AG04449 (cell line): ENCODE measurements at regions of chr19 and their contacts with region 1.

Region 1: DNA sequence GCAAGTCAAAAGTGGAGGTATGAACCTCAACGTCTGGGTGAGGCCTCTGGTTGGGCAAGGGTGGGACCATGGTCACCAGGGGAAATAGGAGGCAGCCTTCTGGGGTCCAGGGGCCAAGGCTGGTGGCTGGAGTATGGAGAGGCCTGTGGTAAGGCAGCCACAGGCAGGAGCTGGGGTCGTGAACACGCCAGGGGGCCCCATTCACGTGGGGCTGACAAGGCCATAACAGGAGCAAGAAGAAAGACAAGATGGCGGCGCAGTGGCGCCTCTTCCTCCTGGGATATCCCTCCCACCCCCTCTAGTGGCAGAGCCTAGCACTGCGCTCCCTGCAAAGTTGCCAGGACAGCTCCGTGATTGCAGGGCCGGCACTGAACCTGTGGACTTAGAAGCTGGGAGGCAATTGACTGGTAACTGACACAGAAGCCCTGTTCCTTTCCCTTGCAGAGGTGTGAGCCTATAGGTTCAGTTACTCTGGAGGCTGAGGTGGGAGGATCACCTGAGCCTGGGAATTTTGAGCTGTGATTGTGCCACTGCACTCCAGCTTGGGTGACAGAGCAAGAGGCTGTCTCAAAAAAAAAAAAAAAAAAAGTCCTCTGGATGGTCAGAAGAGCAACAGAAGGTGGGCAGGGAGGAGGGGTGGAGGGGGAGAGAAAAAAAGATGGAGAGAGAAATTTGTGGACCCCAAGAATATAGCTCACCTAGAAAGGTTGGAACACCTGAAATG is 19.7 kb upstream of the EDDM13 start:
- DNase-seq: no peak
- H3K4me3 ChIP-seq: no peak overlapping the region
- CTCF ChIP-seq: peak; percentile 89

Region 2: GRCh38 chr19:56066152-56067023 is 186.5 kb before region 1 on chr19:
- CTCF ChIA-PET with region 1: interaction called, 12 read pairs
- POLR2A ChIA-PET with region 1: no interaction called
- DNase-seq: no peak
- H3K4me3 ChIP-seq: peak overlapping the region; percentile 36
- CTCF ChIP-seq: peak; percentile 93

Region 3: GRCh38 chr19:56273563-56274117 is 20.8 kb after region 1 on chr19:
- CTCF ChIA-PET with region 1: interaction called, 80 read pairs
- POLR2A ChIA-PET with region 1: no interaction called
- DNase-seq: no peak
- H3K4me3 ChIP-seq: no peak overlapping the region
- CTCF ChIP-seq: no peak

Region 4: GRCh38 chr19:56333505-56333904 is 80.6 kb after region 1 on chr19:
- CTCF ChIA-PET with region 1: interaction called, 207 read pairs
- POLR2A ChIA-PET with region 1: no interaction called
- DNase-seq: no peak
- H3K4me3 ChIP-seq: no peak overlapping the region
- CTCF ChIP-seq: peak; percentile 67

Region 5: DNA sequence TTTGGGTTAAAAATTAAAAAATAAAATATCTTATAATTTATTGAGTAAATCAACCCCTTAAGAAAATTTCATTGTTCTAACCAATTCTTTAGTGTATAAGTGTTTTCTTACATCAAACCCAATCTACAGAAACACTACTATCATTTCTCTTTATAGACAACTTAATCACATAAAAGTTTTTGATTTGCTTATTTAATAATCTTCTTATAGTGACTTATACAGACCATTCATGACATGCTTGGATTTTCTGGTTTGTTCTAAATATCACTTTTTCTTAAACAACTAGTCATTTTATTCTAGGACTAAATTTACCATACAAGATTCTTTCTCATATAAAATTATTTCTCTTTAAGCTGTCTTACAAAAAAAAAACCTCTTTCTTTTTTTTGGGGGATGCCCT is 89.1 kb after region 1 on chr19:
- CTCF ChIA-PET with region 1: interaction called, 16 read pairs
- POLR2A ChIA-PET with region 1: no interaction called
- DNase-seq: no peak
- H3K4me3 ChIP-seq: no peak overlapping the region
- CTCF ChIP-seq: no peak

Region 6: DNA sequence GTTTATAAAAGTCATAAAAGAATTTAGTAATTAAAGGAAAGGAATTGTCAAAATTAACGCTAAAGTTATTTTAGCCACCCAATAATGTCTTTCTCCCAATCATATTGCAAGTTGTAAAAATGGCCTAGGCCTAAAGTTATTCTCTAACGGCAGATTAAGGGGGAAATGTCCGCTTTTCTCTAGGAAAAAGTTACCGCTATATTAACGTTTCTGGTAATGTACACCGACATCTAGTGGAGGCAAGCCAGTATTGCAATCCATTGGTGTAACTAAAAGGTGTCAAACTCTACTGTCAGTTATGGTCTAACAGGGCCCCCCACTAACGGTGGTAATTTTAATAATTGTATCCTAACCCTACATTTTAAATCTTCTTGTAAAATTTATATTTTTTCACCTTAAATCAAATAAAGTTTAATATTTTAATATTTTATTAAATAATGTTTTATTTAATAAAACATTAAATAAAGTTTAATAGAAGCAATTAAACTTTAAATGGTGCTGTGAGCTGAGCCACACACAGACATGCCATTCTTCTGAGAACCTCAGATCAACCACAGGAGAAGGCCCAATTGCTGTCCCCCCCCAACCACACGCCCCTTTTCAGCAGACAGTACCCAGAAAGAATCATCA is 97.7 kb after region 1 on chr19:
- CTCF ChIA-PET with region 1: interaction called, 23 read pairs
- POLR2A ChIA-PET with region 1: no interaction called
- DNase-seq: no peak
- H3K4me3 ChIP-seq: no peak overlapping the region
- CTCF ChIP-seq: peak; percentile 79